Activated CD4-positive, alpha-beta T cell treated with anti-CD3 and anti-CD28 coated beads for 36 hours (primary cell): ENCODE measurements at regions of chr15 and their contacts with region 1.

Region 1: DNA sequence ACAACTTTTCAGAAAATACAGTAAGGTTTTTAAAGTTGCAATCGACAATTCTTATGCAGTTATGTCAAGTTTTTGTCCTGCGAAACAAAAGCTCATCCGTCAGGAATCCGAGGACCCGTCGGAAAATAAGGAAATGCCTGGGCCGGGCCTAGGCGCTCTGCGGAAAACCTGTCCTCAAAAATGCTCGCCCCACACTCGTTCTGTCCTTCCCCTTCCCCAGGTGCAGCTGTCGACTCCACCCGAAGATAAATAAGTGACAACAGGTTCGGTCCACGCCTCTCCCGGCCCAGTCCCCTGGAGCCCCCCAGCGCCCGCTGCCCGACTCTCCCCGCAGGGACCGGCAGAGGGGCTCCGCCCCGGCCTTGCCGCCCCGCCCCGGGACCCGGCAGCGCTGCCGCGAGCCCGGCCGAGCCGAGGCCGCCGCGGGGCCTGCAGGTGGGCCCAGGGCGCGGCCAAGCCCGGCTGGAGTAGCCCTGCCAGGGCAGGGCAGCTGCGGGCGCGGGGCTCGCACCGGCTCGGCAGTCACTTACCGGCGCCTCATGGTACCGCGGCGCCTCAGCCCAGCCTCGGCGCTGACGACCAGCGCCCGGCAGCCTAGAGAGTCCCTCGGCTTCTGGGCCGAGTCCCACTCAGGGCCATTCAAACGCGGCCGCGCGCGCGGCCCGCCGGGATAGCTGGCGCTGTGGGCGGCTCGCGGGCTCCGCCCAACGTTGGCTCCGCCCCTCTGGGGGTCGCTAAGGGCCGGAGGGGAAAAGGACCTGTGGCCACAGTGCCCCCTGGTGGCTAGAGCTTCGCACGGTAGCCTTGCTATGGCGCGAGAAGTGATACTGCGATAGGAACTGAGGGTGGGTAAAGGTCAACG is at the start of gene KATNBL1:
- DNase-seq: peak; percentile 99
- ATAC-seq: peak; percentile 94
- H3K4me3 Mint-ChIP-seq: peak within 1 kb of the TSS; percentile 89
- H3K27ac Mint-ChIP-seq: peak within 1 kb of the TSS; percentile 80
- H3K4me1 Mint-ChIP-seq: peaks cover 32% of the 10 kb centered on the region
- H3K27me3 Mint-ChIP-seq: no peaks in the 10 kb centered on the region
- total RNA-seq, gene KATNBL1: 45.0 to 47.5 TPM

Region 2: GRCh38 chr15:33737687-33738601 is 471.7 kb before region 1 on chr15:
- CTCF ChIA-PET with region 1: interaction called, 3 read pairs
- POLR2A ChIA-PET with region 1: no interaction called
- intact Hi-C with region 1: loop called in 1 of 2 experiments (anchors 2 kb)
- DNase-seq: peak; percentile 60
- ATAC-seq: peak; percentile 39
- H3K4me3 Mint-ChIP-seq: no peak overlapping the region
- H3K27ac Mint-ChIP-seq: no peak overlapping the region
- H3K4me1 Mint-ChIP-seq: no peaks in the 10 kb centered on the region
- H3K27me3 Mint-ChIP-seq: peaks cover 2% of the 10 kb centered on the region

Region 3: GRCh38 chr15:33872416-33873106 is 337.1 kb before region 1 on chr15:
- CTCF ChIA-PET with region 1: no interaction called
- POLR2A ChIA-PET with region 1: no interaction called
- intact Hi-C with region 1: no loop called
- DNase-seq: no peak
- ATAC-seq: no peak
- H3K4me3 Mint-ChIP-seq: no peak overlapping the region
- H3K27ac Mint-ChIP-seq: no peak overlapping the region
- H3K4me1 Mint-ChIP-seq: no peaks in the 10 kb centered on the region
- H3K27me3 Mint-ChIP-seq: no peaks in the 10 kb centered on the region

Region 4: GRCh38 chr15:34056936-34057335 is 152.7 kb before region 1 on chr15:
- CTCF ChIA-PET with region 1: interaction called, 23 read pairs
- POLR2A ChIA-PET with region 1: no interaction called
- intact Hi-C with region 1: loop called (anchors 1 kb)
- DNase-seq: no peak
- ATAC-seq: no peak
- H3K4me3 Mint-ChIP-seq: no peak overlapping the region
- H3K27ac Mint-ChIP-seq: no peak overlapping the region
- H3K4me1 Mint-ChIP-seq: peaks cover 4% of the 10 kb centered on the region
- H3K27me3 Mint-ChIP-seq: no peaks in the 10 kb centered on the region

Region 5: GRCh38 chr15:34109797-34110663 is 99.6 kb before region 1 on chr15:
- CTCF ChIA-PET with region 1: interaction called, 33 read pairs
- POLR2A ChIA-PET with region 1: interaction called, 4 read pairs
- intact Hi-C with region 1: loop called (anchors 1 kb)
- DNase-seq: no peak
- ATAC-seq: peak; percentile 60
- H3K4me3 Mint-ChIP-seq: no peak overlapping the region
- H3K27ac Mint-ChIP-seq: no peak overlapping the region
- H3K4me1 Mint-ChIP-seq: no peaks in the 10 kb centered on the region
- H3K27me3 Mint-ChIP-seq: peaks cover 2% of the 10 kb centered on the region

Region 6: DNA sequence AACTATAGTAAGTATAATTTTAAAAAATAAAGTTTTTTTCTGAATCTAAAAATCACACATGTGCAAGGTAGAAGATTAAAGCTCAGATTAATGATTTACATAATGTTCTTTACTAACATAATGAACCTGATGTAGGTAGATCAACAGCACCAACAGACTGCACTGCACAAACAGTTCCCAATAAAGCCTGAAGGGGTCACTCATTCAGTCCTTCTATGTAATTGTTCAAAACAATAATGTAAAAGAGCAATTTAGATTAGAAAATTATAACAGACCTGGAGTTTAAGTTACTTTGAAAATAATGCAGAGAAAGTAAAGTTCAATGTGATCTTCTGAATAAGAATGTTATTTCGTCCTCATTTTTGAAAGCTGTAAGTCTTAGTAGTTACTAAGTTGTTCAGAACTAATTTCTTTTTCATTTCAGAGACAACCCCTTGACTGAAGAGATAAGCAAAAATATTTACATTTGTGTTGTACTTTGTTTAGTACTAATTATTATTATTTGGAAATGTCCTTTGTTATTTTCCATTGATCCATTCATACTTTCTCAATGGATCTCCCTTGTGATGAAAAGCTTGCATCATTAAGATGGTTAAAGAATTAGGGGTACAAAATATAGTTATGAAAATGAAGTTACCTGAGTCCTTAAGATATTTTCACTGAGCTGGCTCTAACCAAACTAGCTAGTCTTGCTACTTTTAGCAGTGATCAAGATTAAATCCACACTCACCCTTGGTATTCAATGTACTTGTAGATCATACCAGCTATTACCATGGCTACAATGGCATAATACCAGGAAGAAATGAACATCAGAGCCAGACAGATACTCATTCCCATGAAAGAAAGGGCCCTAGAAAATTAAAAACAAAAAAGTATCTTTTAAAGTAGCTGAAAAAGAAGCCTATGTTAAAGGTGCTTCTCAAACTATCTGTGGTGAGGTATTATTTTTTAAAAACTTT is 32.0 kb after region 1 on chr15:
- CTCF ChIA-PET with region 1: interaction called, 3 read pairs
- POLR2A ChIA-PET with region 1: no interaction called
- intact Hi-C with region 1: loop called (anchors 1 kb)
- DNase-seq: peak; percentile 35
- ATAC-seq: peak; percentile 68
- H3K4me3 Mint-ChIP-seq: no peak overlapping the region
- H3K27ac Mint-ChIP-seq: peak overlapping the region; percentile 39
- H3K4me1 Mint-ChIP-seq: peaks cover 33% of the 10 kb centered on the region
- H3K27me3 Mint-ChIP-seq: no peaks in the 10 kb centered on the region

Region 7: GRCh38 chr15:35545824-35546510 is 1336.3 kb after region 1 on chr15 and contains the start of gene DPH6:
- CTCF ChIA-PET with region 1: no interaction called
- POLR2A ChIA-PET with region 1: no interaction called
- intact Hi-C with region 1: loop called in 1 of 2 experiments (anchors 10 kb)
- DNase-seq: peak; percentile 87
- ATAC-seq: peak; percentile 89
- H3K4me3 Mint-ChIP-seq: peak within 1 kb of the TSS; percentile 95
- H3K27ac Mint-ChIP-seq: peak within 1 kb of the TSS; percentile 99
- H3K4me1 Mint-ChIP-seq: peaks cover 23% of the 10 kb centered on the region
- H3K27me3 Mint-ChIP-seq: no peaks in the 10 kb centered on the region
- total RNA-seq, gene DPH6: 8.1 to 14.0 TPM